Cardiac septum (tissue), 1 donor: ENCODE measurements at regions of chr15 and their contacts with region 1.

Region 1: GRCh38 chr15:43824302-43825246 is at the start of gene MFAP1:
- DNase-seq: peak; percentile 97
- total RNA-seq, gene MFAP1: 19.8 TPM

Region 2: GRCh38 chr15:43800286-43801141 is 24.1 kb before region 1 on chr15 and contains the start of gene HYPK:
- intact Hi-C with region 1: loop called (anchors 2 kb)
- DNase-seq: peak; percentile 97
- total RNA-seq, gene HYPK: 11.7 TPM

Region 3: GRCh38 chr15:44812029-44812517 is 987.5 kb after region 1 on chr15:
- intact Hi-C with region 1: no loop called
- DNase-seq: no peak